Right lobe of liver (tissue), 6 donors: ENCODE measurements at regions of chr2 and their contacts with region 1.

Region 1: DNA sequence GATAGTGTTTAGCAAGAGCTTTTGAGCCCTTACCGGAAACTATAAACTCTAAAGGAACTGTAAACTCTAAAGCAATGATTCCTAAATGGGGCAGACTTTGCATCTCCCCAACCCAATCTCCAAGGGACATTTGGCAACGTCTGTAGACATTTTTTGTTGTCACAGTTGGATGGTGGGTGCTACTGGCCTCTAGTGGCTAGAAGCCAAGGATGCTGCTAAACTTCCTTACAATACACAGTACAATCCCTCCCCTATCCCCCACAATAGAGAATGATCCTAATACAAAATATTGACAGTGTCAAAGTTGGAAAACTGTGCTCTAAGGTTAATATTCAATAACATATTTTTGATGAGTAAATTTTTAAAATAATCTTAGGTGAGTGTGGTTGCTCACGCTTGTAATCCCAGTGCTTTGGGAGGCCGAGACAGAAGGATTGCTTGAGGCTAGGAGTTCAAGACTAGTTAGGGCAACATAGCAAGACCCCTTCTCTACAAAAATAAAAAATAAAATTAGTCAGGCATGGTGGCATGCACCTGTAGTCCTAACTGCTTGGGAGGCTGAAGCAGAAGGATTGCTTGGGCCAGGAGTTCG is 66.7 kb downstream of the PTPN4 start:
- DNase-seq: no peak
- ATAC-seq: peak; percentile 55 to 78 (median 66)
- H3K4me3 ChIP-seq: no peak overlapping the region
- H3K27ac ChIP-seq: no peak overlapping the region
- H3K4me1 ChIP-seq: no peaks in the 10 kb centered on the region
- H3K27me3 ChIP-seq: no peaks in the 10 kb centered on the region
- CTCF ChIP-seq: peak; percentile 17 to 54 (median 47)
- POLR2A ChIP-seq: no peak

Region 2: GRCh38 chr2:118576109-118576855 is 1250.2 kb before region 1 on chr2:
- intact Hi-C with region 1: no loop called
- DNase-seq: no peak
- ATAC-seq: no peak
- H3K4me3 ChIP-seq: no peak overlapping the region
- H3K27ac ChIP-seq: no peak overlapping the region
- H3K4me1 ChIP-seq: no peaks in the 10 kb centered on the region
- H3K27me3 ChIP-seq: no peaks in the 10 kb centered on the region
- CTCF ChIP-seq: no peak
- POLR2A ChIP-seq: no peak

Region 3: DNA sequence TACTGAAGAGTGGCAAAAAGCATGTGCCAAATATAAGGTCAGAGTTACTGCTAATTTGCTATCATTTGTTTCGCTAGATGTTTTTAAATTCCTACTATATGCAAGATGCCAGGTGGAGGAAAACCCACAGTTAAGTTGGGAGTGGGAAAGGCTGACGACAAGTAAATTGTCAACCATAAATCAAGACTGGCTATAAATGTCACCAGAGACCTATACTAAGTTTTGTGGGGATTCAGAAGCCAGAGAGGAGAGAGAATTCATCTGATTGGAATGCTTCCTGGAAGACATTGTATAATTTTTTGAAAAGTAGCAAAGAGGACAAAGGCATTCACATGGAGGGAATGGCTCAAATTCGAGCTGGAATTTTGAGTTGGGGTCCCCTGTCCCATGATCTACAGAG is 217.9 kb before region 1 on chr2:
- intact Hi-C with region 1: no loop called
- DNase-seq: no peak
- ATAC-seq: no peak
- H3K4me3 ChIP-seq: no peak overlapping the region
- H3K27ac ChIP-seq: no peak overlapping the region
- H3K4me1 ChIP-seq: no peaks in the 10 kb centered on the region
- H3K27me3 ChIP-seq: no peaks in the 10 kb centered on the region
- CTCF ChIP-seq: no peak
- POLR2A ChIP-seq: no peak

Region 4: GRCh38 chr2:119759451-119760236 is 66.8 kb before region 1 on chr2 and contains the start of gene PTPN4:
- intact Hi-C with region 1: loop called in 1 of 2 experiments (anchors 10 kb)
- DNase-seq: peak; percentile 97 to 98 (median 97)
- ATAC-seq: peak; percentile 89 to 95 (median 90)
- H3K4me3 ChIP-seq: peak within 1 kb of the TSS; percentile 69 to 77 (median 71)
- H3K27ac ChIP-seq: peak within 1 kb of the TSS; percentile 83 to 89 (median 87)
- H3K4me1 ChIP-seq: peaks cover 0 to 23% (median 4%) of the 10 kb centered on the region in 4 donors
- H3K27me3 ChIP-seq: no peaks in the 10 kb centered on the region
- CTCF ChIP-seq: no peak
- POLR2A ChIP-seq: peak; percentile 89
- total RNA-seq, gene PTPN4: 8.5 to 19.9 (median 14.8) TPM